ENCODE measurements at regions of chr2 and their contacts with region 1.

Region 1: GRCh38 chr2:200127848-200128247 is 172.5 kb downstream of the MAIP1 start:
- DNase-seq: no peak
- ATAC-seq: no peak

Region 2: GRCh38 chr2:200411831-200412230 is 284.0 kb after region 1 on chr2:
- intact Hi-C with region 1: loop called in 1 of 2 experiments (anchors 10 kb)
- DNase-seq: no peak
- ATAC-seq: no peak